ENCODE measurements at regions of chr11 and their contacts with region 1.

Region 1: GRCh38 chr11:18594999-18595749 is 4.4 kb upstream of the MISFA start:
- DNase-seq: no peak
- H3K4me3 ChIP-seq: no peak overlapping the region
- CTCF ChIP-seq: no peak

Region 2: GRCh38 chr11:18634140-18635032 is 39.2 kb after region 1 on chr11 and contains the start of gene SPTY2D1:
- in situ Hi-C with region 1: loop called (anchors 5 kb)
- DNase-seq: peak; percentile 99
- H3K4me3 ChIP-seq: peak within 1 kb of the TSS; percentile 99
- CTCF ChIP-seq: no peak

Measured in astrocyte of the cerebellum (primary cell).